ENCODE measurements at regions of chr1 and their contacts with region 1.

Region 1: GRCh38 chr1:220046052-220046930 is at the start of gene EPRS1:
- DNase-seq: peak; percentile 96
- H3K4me3 ChIP-seq: peak within 1 kb of the TSS; percentile 79 to 99 (median 99)
- H3K27ac ChIP-seq: peak within 1 kb of the TSS; percentile 67
- H3K4me1 ChIP-seq: no peaks in the 10 kb centered on the region
- H3K27me3 ChIP-seq: no peaks in the 10 kb centered on the region
- CTCF ChIP-seq: peak; percentile 53 to 70
- total RNA-seq, gene EPRS1: 164 to 171 TPM

Region 2: GRCh38 chr1:220089650-220090556 is 43.6 kb after region 1 on chr1 and contains the start of gene BPNT1:
- CTCF ChIA-PET with region 1: no interaction called
- dilution Hi-C with region 1: no loop called
- in situ Hi-C with region 1: no loop called
- intact Hi-C with region 1: loop called (anchors 1 kb)
- DNase-seq: peak; percentile 96
- H3K4me3 ChIP-seq: peak within 1 kb of the TSS; percentile 69 to 95 (median 91)
- H3K27ac ChIP-seq: peak within 1 kb of the TSS; percentile 39
- H3K4me1 ChIP-seq: peaks cover 5% of the 10 kb centered on the region
- H3K27me3 ChIP-seq: no peaks in the 10 kb centered on the region
- CTCF ChIP-seq: peak in 1 of 2 donors; percentile 1
- total RNA-seq, gene BPNT1: 27.7 to 32.2 TPM

Region 3: GRCh38 chr1:220170836-220171526 is 124.7 kb after region 1 on chr1:
- CTCF ChIA-PET with region 1: no interaction called
- dilution Hi-C with region 1: no loop called
- in situ Hi-C with region 1: no loop called
- intact Hi-C with region 1: no loop called
- DNase-seq: no peak
- H3K4me3 ChIP-seq: no peak overlapping the region
- H3K27ac ChIP-seq: no peak overlapping the region
- H3K4me1 ChIP-seq: no peaks in the 10 kb centered on the region
- H3K27me3 ChIP-seq: no peaks in the 10 kb centered on the region
- CTCF ChIP-seq: no peak